Activated CD4-positive, alpha-beta T cell treated with anti-CD3 and anti-CD28 coated beads for 36 hours (primary cell): ENCODE measurements at regions of chr3 and their contacts with region 1.

Region 1: DNA sequence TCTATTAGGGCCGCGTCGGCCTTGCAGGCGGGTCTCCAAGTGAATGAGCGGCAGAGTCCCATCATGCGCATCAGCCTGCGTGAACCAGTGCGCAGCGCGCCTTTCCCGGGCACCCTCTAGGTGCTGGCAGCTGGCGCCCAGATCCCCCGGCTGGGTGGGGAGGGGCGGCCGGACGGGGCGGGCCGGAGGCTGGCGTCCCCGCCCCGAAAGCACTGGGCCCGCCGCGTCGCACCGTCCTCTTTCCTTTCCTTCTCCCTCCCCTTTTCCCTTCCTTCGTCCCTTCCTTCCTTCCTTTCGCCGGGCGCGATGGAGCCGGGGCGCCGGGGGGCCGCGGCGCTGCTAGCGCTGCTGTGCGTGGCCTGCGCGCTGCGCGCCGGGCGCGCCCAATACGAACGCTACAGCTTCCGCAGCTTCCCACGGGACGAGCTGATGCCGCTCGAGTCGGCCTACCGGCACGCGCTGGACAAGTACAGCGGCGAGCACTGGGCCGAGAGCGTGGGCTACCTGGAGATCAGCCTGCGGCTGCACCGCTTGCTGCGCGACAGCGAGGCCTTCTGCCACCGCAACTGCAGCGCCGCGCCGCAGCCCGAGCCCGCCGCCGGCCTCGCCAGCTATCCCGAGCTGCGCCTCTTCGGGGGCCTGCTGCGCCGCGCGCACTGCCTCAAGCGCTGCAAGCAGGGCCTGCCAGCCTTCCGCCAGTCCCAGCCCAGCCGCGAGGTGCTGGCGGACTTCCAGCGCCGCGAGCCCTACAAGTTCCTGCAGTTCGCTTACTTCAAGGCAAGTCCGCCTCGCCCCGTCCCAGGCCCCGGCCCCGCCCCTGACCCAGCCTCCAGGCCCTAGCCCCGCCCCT is at the start of gene CRTAP:
- DNase-seq: peak; percentile 93
- ATAC-seq: peak; percentile 87
- H3K4me3 Mint-ChIP-seq: peak within 1 kb of the TSS; percentile 77
- H3K27ac Mint-ChIP-seq: peak within 1 kb of the TSS; percentile 73
- H3K4me1 Mint-ChIP-seq: peaks cover 47% of the 10 kb centered on the region
- H3K27me3 Mint-ChIP-seq: no peaks in the 10 kb centered on the region
- total RNA-seq, gene CRTAP: 39.2 to 43.4 TPM

Region 2: GRCh38 chr3:32992322-32992692 is 121.7 kb before region 1 on chr3:
- CTCF ChIA-PET with region 1: no interaction called
- POLR2A ChIA-PET with region 1: no interaction called
- intact Hi-C with region 1: loop called (anchors 1 to 5 kb)
- DNase-seq: no peak
- ATAC-seq: peak; percentile 6
- H3K4me3 Mint-ChIP-seq: peak overlapping the region; percentile 62
- H3K27ac Mint-ChIP-seq: peak overlapping the region; percentile 95
- H3K4me1 Mint-ChIP-seq: peaks cover 80% of the 10 kb centered on the region
- H3K27me3 Mint-ChIP-seq: peaks cover 2% of the 10 kb centered on the region

Region 3: DNA sequence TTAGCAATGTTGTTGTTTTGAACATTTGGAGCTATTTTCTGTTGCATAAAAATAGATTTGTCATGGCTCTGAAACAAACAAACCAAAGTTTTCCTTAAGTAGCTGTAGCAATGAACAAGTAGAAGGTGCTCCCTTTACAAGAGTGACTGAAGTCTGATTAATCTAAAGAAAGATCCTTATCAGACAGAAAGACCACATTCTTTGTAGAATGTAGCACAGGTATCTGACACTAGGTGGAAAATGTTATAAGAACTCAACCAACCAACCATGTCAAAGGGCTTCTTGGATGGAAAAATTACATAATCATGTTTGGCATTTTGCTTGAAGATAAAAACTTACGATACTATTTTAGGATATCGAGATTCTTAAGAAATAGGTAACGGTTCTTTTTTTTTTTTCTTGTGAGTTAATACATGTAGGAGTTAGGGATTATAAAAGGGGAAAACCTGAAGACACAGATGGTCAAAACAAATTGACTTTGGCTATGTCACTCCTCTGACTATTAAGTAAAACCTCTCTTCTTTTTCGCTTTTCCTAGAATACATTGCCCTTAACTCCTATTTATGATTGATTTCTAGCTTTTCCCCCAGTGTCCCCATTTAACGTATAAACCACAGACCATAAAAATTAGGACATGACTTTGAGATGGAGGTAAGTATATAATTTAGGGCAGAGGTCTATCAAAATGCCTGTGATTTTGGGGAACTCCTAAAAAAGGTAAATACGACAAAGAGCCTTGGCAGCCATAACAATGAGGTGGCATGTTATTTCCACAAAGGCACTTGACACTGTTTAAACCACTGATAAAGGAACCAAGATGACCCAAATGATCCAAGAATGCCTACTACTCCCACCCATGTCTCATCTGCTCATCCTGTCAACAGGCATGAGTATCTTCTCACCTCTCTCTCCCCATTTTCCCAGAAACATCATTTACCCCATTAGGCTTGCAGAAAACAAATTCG is 90.5 kb before region 1 on chr3:
- CTCF ChIA-PET with region 1: interaction called, 3 read pairs
- POLR2A ChIA-PET with region 1: no interaction called
- intact Hi-C with region 1: loop called in 1 of 2 experiments (anchors 2 kb)
- DNase-seq: no peak
- ATAC-seq: peak; percentile 85
- H3K4me3 Mint-ChIP-seq: peak overlapping the region; percentile 34
- H3K27ac Mint-ChIP-seq: peak overlapping the region; percentile 91
- H3K4me1 Mint-ChIP-seq: peaks cover 56% of the 10 kb centered on the region
- H3K27me3 Mint-ChIP-seq: no peaks in the 10 kb centered on the region

Region 4: DNA sequence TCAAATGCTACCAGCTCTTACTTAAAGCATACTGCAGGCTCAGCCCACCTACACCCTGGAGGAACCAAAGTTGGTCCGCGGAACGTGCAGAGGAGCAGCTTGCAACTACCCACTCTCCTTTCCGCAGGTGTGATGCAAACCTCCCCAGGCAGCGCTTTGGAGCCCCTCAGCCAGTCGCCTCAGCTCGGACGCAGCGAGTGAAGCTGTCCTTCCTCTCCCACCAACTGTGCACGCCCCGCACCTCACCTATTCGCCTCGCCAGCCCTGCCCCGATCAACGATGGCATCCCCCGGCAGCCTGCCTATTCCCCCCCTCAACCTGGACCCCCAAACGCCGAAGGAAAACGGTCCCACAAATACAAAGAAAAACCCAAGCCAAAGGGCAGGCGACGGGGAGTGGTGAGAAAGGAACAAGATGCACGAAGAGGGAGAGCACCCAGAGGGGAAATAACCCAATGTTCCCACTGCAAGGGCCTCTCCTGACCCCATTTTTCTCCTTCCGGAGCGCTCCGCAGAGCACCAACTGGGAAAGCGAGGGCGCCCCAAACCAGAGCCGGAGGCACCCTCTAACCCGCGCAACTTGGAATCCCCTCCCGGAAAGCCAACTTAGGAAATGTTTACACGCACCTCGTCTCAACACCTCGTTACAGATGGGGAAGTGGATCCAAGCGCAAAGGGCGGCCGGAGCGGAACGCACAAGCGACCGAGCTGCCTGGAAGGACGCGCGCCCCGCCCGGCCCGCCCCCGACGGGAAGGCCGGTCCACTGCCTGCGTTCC is 17.7 kb before region 1 on chr3:
- CTCF ChIA-PET with region 1: interaction called, 5 read pairs
- POLR2A ChIA-PET with region 1: interaction called, 3 read pairs
- intact Hi-C with region 1: loop called (anchors 1 kb)
- DNase-seq: peak; percentile 66
- ATAC-seq: peak; percentile 46
- H3K4me3 Mint-ChIP-seq: peak overlapping the region; percentile 99
- H3K27ac Mint-ChIP-seq: peak overlapping the region; percentile 92
- H3K4me1 Mint-ChIP-seq: peaks cover 40% of the 10 kb centered on the region
- H3K27me3 Mint-ChIP-seq: no peaks in the 10 kb centered on the region

Region 5: GRCh38 chr3:33717866-33718594 is 604.0 kb after region 1 on chr3 and contains the start of gene CLASP2:
- CTCF ChIA-PET with region 1: no interaction called
- POLR2A ChIA-PET with region 1: no interaction called
- intact Hi-C with region 1: loop called in 1 of 2 experiments (anchors 5 kb)
- DNase-seq: peak; percentile 90
- ATAC-seq: peak; percentile 85
- H3K4me3 Mint-ChIP-seq: no peak within 1 kb of the TSS
- H3K27ac Mint-ChIP-seq: peak within 1 kb of the TSS; percentile 94
- H3K4me1 Mint-ChIP-seq: peaks cover 6% of the 10 kb centered on the region
- H3K27me3 Mint-ChIP-seq: no peaks in the 10 kb centered on the region
- total RNA-seq, gene CLASP2: 45.5 to 68.5 TPM